AG04450 (cell line): ENCODE measurements at regions of chr17 and their contacts with region 1.

Region 1: GRCh38 chr17:68035523-68036303 is at the start of gene KPNA2:
- DNase-seq: peak; percentile 96
- H3K4me3 ChIP-seq: peak within 1 kb of the TSS; percentile 92
- H3K27ac ChIP-seq: peak within 1 kb of the TSS; percentile 65
- H3K27me3 ChIP-seq: no peaks in the 10 kb centered on the region
- CTCF ChIP-seq: no peak
- polyA plus RNA-seq, gene KPNA2: 134 and 151 TPM in 2 replicates

Region 2: GRCh38 chr17:67993596-67994361 is 41.9 kb before region 1 on chr17:
- CTCF ChIA-PET with region 1: no interaction called
- POLR2A ChIA-PET with region 1: interaction called, 12 read pairs
- DNase-seq: no peak
- H3K4me3 ChIP-seq: peak overlapping the region; percentile 82
- H3K27ac ChIP-seq: peak overlapping the region; percentile 89
- H3K27me3 ChIP-seq: no peaks in the 10 kb centered on the region
- CTCF ChIP-seq: no peak

Region 3: DNA sequence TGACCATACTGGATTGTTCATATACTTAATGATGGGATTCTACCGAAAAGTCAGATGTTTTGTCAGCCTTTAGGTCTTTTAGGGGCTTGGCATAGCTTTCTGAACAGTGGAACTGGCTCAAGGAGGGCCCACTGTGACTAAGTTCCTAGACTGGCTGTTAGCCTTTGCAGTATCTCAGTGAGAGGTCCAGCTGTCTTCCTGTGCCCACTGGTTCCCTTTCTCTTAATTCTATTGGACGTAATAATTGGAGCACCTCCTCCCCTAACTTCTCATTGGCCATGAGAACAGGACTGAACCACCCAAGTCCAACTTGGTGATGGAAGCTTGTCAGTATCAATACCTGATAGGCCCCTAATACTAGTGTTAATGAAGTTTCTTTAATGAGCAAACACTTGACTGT is 13.3 kb after region 1 on chr17:
- CTCF ChIA-PET with region 1: no interaction called
- POLR2A ChIA-PET with region 1: interaction called, 11 read pairs
- DNase-seq: no peak
- H3K4me3 ChIP-seq: no peak overlapping the region
- H3K27ac ChIP-seq: no peak overlapping the region
- H3K27me3 ChIP-seq: no peaks in the 10 kb centered on the region
- CTCF ChIP-seq: no peak

Region 4: DNA sequence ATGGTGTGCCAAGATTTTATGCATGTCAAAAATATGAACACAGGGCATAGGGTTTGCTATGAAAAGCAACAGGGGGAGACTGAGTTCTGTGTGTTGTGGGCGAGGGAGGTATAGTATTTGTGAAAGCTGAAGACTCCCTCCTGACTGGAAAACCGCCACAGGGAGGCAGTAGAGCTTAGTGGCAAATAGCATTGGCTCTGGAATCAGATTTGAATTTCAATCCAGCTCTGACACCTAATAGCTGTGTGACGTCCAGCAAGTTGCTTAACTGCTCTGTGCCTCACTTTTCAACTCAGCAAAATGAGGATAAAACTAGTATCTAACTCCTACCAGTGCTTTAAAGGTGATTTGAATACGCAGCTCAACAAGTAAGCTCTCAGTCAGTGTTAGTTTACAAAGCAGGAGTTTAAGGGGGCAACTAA is 21.8 kb after region 1 on chr17:
- CTCF ChIA-PET with region 1: no interaction called
- POLR2A ChIA-PET with region 1: interaction called, 10 read pairs
- DNase-seq: no peak
- H3K4me3 ChIP-seq: no peak overlapping the region
- H3K27ac ChIP-seq: no peak overlapping the region
- H3K27me3 ChIP-seq: no peaks in the 10 kb centered on the region
- CTCF ChIP-seq: peak; percentile 60

Region 5: DNA sequence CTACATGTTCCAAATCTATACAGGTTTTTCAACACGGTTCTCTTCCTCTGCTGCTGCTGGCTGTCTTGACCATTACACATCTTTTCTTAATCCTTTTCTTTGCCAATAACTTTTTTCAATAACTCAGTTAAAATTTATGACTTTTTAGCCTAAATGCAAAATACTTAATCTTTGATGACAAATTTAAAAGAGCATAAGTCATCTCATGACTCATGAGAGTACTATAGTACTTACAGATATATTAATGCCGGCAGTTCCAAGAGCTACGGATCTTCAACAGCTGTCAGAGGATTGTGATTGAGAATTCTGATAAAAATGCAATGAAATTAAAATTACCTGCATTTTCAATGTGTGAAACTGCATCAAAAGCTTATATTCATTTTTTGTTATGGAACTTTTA is 105.3 kb after region 1 on chr17:
- CTCF ChIA-PET with region 1: no interaction called
- POLR2A ChIA-PET with region 1: no interaction called
- DNase-seq: no peak
- H3K4me3 ChIP-seq: no peak overlapping the region
- H3K27ac ChIP-seq: no peak overlapping the region
- H3K27me3 ChIP-seq: peaks cover 2% of the 10 kb centered on the region
- CTCF ChIP-seq: no peak